ENCODE measurements at regions of chr11 and their contacts with region 1.

Region 1: GRCh38 chr11:62591448-62592145 is at the start of gene TUT1:
- DNase-seq: peak; percentile 78 to 99 (median 98)
- ATAC-seq: peak; percentile 92
- H3K4me3 ChIP-seq: peak within 1 kb of the TSS; percentile 82
- H3K4me3 Mint-ChIP-seq: peak within 1 kb of the TSS; percentile 87 to 100 (median 96)
- H3K27ac ChIP-seq: peak within 1 kb of the TSS; percentile 94
- H3K27ac Mint-ChIP-seq: peak within 1 kb of the TSS; percentile 92 to 99 (median 96)
- H3K4me1 ChIP-seq: peaks cover 14 to 35% of the 10 kb centered on the region in 2 donors
- H3K4me1 Mint-ChIP-seq: peaks cover 26 to 66% (median 52%) of the 10 kb centered on the region in 7 donors
- H3K27me3 ChIP-seq: no peaks in the 10 kb centered on the region
- H3K27me3 Mint-ChIP-seq: peaks cover 0 to 4% (median 0%) of the 10 kb centered on the region in 5 donors
- total RNA-seq, gene TUT1: 34.5 to 54.6 (median 37.4) TPM

Region 2: DNA sequence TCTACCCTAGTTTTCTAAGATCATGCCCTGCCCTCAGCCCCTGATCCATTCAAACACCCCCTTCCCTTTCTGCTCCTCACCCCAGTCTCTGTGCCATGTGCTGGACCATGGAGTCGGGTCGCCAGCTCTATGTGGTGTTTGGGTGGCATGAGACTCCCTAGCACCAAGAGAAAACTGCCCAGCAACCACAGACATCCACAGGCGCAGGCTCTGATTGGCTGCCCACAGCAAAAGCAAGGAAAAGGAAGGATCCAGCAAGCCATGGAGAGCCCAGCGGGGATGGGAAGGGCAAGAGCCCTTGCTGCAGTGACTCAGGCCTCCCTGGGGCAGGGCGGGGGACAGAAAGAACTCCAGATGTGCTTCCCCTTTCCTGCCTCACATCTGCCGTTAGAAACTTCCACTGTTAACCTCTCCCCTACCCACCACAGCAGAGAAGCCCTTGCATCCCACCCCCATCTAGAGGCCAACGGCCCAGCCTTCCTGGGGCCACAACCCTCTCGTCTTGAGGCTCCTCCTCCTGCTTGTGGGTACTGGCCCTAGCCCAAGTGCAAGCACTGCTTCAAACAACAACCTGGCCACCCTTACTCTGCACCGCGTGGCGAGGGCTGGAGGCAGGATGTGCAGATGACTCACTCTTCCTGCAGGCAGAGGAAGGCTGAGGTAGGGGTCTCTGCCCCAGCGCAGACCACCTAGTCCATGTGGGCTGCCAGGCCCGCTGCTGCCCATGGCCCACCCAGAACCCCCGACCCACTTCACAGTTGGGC is 35.3 kb before region 1 on chr11:
- CTCF ChIA-PET with region 1: interaction called, 7 read pairs
- POLR2A ChIA-PET with region 1: interaction called, 15 read pairs
- intact Hi-C with region 1: loop called (anchors 2 kb)
- DNase-seq: peak; percentile 58 to 82 (median 72)
- ATAC-seq: peak; percentile 48
- H3K4me3 ChIP-seq: peak overlapping the region; percentile 42
- H3K4me3 Mint-ChIP-seq: peak overlapping the region; percentile 65 to 87 (median 78)
- H3K27ac ChIP-seq: peak overlapping the region; percentile 87
- H3K27ac Mint-ChIP-seq: peak overlapping the region; percentile 87 to 100 (median 98)
- H3K4me1 ChIP-seq: peaks cover 69 to 84% of the 10 kb centered on the region in 2 donors
- H3K4me1 Mint-ChIP-seq: peaks cover 62 to 88% (median 81%) of the 10 kb centered on the region in 7 donors
- H3K27me3 ChIP-seq: no peaks in the 10 kb centered on the region
- H3K27me3 Mint-ChIP-seq: peaks cover 0 to 2% (median 0%) of the 10 kb centered on the region in 5 donors

Region 3: DNA sequence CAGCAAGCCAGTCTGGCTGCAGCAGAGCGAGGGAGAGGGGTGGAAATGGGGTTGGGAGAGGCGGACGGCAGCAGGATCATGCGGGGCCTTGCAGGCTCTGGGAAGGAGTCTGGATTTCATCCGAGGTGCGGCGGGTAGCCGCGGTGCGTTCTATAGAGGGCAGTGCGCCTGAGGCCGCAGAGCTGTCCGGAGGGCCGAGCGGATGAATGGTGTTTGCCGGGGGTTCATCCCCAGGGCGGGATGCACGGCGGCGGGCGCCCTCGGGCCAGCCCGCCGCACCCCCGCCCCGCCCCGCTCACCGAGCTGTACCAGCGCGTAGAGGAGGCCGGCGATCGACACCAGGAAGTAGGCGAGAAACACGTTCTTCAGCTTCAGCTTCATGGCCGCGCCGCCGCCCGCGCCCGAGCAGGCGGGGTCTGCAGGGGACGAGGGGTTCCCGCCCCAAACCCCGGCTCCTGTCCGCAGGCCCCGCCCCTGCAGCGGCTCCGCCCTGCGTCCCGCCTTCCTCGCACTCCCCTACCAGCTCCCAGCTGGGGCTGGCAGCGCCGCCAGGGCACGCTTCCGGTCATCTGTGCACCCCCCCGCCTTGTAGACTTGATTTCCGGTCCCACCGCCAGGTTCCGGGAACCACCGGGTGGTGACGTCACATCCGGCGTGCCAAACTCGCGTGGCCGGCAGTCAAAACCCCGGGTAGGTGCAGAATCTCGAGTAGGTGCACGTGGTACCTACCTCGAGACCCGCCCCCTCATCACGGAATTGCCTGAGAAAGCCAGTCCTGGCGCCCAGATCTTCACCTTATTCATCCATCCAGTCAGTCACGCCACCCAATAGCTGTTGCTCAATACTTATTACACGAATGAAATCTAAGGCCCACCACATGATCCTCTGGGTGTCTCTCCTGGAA is 30.2 kb after region 1 on chr11 and contains the start of gene B3GAT3:
- CTCF ChIA-PET with region 1: interaction called, 6 read pairs
- POLR2A ChIA-PET with region 1: interaction called, 70 read pairs
- intact Hi-C with region 1: loop called (anchors 1 kb)
- DNase-seq: peak; percentile 87 to 97 (median 94)
- ATAC-seq: peak; percentile 93
- H3K4me3 ChIP-seq: peak within 1 kb of the TSS; percentile 97
- H3K4me3 Mint-ChIP-seq: peak within 1 kb of the TSS; percentile 91 to 99 (median 94)
- H3K27ac ChIP-seq: peak within 1 kb of the TSS; percentile 92
- H3K27ac Mint-ChIP-seq: peak within 1 kb of the TSS; percentile 92 to 99 (median 96)
- H3K4me1 ChIP-seq: peaks cover 11% of the 10 kb centered on the region in 2 donors
- H3K4me1 Mint-ChIP-seq: peaks cover 13 to 29% (median 26%) of the 10 kb centered on the region in 7 donors
- H3K27me3 ChIP-seq: no peaks in the 10 kb centered on the region
- H3K27me3 Mint-ChIP-seq: no peaks in the 10 kb centered on the region
- total RNA-seq, gene B3GAT3: 55.8 to 78.1 (median 71.2) TPM

Region 4: DNA sequence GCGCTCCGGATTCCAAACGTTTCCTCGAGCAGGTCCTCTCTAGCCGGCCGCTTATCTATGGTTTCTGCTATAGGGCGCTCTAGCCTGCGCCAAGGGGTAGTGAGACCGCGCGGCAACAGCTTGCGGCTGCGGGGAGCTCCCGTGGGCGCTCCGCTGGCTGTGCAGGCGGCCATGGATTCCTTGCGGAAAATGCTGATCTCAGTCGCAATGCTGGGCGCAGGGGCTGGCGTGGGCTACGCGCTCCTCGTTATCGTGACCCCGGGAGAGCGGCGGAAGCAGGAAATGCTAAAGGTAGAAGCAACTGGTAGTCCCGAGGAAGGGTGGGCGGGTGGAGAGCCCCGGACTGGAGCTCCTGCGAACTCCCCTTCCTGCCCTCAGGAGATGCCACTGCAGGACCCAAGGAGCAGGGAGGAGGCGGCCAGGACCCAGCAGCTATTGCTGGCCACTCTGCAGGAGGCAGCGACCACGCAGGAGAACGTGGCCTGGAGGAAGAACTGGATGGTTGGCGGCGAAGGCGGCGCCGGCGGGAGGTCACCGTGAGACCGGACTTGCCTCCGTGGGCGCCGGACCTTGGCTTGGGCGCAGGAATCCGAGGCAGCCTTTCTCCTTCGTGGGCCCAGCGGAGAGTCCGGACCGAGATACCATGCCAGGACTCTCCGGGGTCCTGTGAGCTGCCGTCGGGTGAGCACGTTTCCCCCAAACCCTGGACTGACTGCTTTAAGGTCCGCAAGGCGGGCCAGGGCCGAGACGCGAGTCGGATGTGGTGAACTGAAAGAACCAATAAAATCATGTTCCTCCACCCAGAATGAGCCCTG is 80.2 kb after region 1 on chr11 and contains the starts of genes LBHD1 and UQCC3:
- CTCF ChIA-PET with region 1: interaction called, 5 read pairs
- POLR2A ChIA-PET with region 1: interaction called, 269 read pairs
- intact Hi-C with region 1: loop called in 1 of 2 experiments (anchors 1 kb)
- DNase-seq: peak; percentile 49 to 80 (median 73)
- ATAC-seq: peak; percentile 85
- H3K4me3 ChIP-seq: peak within 1 kb of the TSS; percentile 62
- H3K4me3 Mint-ChIP-seq: peak within 1 kb of the TSS; percentile 94 to 100 (median 99)
- H3K27ac ChIP-seq: peak within 1 kb of the TSS; percentile 90
- H3K27ac Mint-ChIP-seq: peak within 1 kb of the TSS; percentile 91 to 97 (median 96)
- H3K4me1 ChIP-seq: peaks cover 12 to 25% of the 10 kb centered on the region in 2 donors
- H3K4me1 Mint-ChIP-seq: peaks cover 12 to 62% (median 51%) of the 10 kb centered on the region in 7 donors
- H3K27me3 ChIP-seq: no peaks in the 10 kb centered on the region
- H3K27me3 Mint-ChIP-seq: no peaks in the 10 kb centered on the region
- total RNA-seq, gene LBHD1: 13.8 to 26.4 (median 20.8) TPM
- total RNA-seq, gene UQCC3: 2.2 to 8.2 (median 5.8) TPM

Region 5: DNA sequence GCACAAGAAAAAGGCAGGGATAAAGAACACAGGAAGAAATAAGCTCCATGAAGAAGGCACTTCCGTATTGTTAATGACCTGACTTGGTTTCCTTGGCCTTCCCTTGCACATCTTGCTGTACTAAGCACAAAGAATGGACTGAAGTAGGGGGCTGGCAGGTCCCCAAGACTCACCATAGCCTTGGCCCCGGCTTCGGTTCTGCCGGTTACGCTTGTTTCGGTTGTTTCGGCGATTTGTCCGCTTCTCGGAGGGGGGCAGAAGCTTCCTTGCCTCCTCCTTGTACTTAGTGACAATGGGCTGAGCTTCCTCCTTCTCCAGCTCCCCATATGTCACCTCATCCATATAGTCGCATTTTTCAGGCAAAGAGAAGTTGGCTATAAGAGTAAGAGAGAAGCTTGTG is 125.2 kb after region 1 on chr11:
- CTCF ChIA-PET with region 1: no interaction called
- POLR2A ChIA-PET with region 1: no interaction called
- intact Hi-C with region 1: no loop called
- DNase-seq: no peak
- ATAC-seq: no peak
- H3K4me3 ChIP-seq: no peak overlapping the region
- H3K4me3 Mint-ChIP-seq: no peak overlapping the region
- H3K27ac ChIP-seq: peak overlapping the region; percentile 52
- H3K27ac Mint-ChIP-seq: peak overlapping the region in 6 of 9 donors; percentile 14 to 56 (median 42)
- H3K4me1 ChIP-seq: peaks cover 0 to 11% of the 10 kb centered on the region in 2 donors
- H3K4me1 Mint-ChIP-seq: peaks cover 7 to 70% (median 56%) of the 10 kb centered on the region in 7 donors
- H3K27me3 ChIP-seq: no peaks in the 10 kb centered on the region
- H3K27me3 Mint-ChIP-seq: no peaks in the 10 kb centered on the region

Region 6: DNA sequence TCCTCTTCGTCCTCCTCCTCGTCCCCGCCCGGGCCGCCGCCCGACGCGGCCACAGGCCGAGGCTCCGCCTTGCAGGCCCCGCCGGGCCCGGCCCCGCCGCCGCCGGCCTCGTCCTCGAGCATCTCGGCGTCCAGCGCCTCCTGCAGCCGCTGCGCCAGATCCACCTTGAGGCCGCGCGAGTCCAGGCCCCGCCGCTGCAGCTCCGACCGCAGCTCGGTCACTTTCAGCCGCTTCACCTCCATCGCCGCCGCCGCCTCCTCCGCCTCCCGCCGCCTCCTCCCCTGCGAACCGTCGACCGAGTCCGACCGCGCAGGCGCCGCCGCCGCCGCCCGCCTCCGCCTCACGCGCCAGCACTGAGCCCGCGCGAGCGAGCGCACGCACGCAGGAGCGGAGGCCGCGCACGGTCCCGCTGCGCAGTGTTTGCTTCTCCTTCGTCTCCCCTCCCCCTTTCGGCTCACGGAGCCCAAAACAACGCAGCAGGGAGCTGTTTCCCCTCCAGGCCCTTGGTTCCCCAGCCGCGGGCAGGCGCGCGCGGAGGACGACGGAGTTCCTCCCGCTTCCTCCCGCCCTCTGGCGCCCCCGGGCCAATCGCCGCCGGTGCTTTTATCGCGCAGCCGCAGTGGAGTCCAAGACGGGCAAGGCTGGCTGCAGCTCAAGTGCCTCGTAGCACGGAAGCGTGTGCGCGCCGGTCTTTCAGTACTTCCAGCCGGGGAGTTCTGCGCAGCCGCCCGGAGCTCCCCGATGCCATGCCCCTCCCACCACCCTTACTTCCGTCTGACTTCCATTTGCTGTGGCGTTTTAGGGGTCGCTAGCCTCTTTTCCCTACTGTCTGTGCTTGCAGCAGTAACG is 135.5 kb after region 1 on chr11 and contains the start of gene HNRNPUL2:
- CTCF ChIA-PET with region 1: interaction called, 5 read pairs
- POLR2A ChIA-PET with region 1: interaction called, 45 read pairs
- intact Hi-C with region 1: loop called (anchors 1 to 5 kb)
- DNase-seq: peak; percentile 96 to 100 (median 99)
- ATAC-seq: peak; percentile 89
- H3K4me3 ChIP-seq: peak within 1 kb of the TSS; percentile 87
- H3K4me3 Mint-ChIP-seq: peak within 1 kb of the TSS; percentile 91 to 99 (median 96)
- H3K27ac ChIP-seq: peak within 1 kb of the TSS; percentile 92
- H3K27ac Mint-ChIP-seq: peak within 1 kb of the TSS; percentile 95 to 100 (median 98)
- H3K4me1 ChIP-seq: peaks cover 36 to 38% of the 10 kb centered on the region in 2 donors
- H3K4me1 Mint-ChIP-seq: peaks cover 23 to 65% (median 58%) of the 10 kb centered on the region in 7 donors
- H3K27me3 ChIP-seq: no peaks in the 10 kb centered on the region
- H3K27me3 Mint-ChIP-seq: peaks cover 0 to 2% (median 0%) of the 10 kb centered on the region in 5 donors
- total RNA-seq, gene HNRNPUL2: 43.4 to 77.5 (median 65.3) TPM

Region 7: DNA sequence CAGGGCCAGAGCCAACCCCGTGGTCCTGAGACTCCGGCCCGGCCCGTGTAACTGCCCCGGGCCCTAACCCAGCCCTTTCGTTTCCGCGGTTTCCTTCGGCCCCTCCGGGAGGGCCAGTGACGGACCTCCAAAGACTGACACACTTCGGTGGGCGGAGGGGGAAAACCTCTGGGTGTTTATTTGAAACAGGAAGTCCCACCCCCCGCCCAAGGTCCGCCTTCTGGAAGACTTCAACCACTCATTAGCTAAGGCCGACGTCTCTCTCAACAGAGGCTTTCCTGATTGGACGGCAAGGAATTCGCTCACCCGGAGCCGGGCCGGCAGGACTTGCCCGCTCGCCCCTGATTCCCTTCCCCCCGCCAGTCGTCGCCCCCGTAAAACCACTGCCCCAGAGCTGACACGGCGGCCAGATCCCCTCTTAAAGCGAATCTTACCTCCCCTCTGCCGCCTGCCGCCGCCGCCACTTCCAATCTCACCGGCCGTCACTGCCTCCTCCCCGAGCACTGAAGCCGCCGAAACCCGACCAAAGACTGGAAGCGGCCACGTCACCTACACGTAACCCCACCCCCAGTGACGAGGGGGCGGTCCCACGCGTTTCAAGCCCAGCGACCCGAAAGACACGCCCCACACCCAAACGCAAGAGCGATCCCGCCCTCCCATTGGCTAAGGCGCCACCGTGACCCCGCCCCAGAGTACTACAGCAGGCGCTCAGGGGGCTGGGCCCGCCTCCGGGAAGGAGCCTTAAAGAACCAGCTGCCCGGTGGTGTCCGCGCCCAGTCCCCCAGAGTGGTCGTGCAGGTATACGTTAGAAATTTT is 240.1 kb after region 1 on chr11 and contains the start of gene STX5:
- CTCF ChIA-PET with region 1: no interaction called
- POLR2A ChIA-PET with region 1: interaction called, 4 read pairs
- intact Hi-C with region 1: loop called in 1 of 2 experiments (anchors 5 kb)
- DNase-seq: peak; percentile 96 to 100 (median 99)
- ATAC-seq: peak; percentile 98
- H3K4me3 ChIP-seq: peak within 1 kb of the TSS; percentile 95
- H3K4me3 Mint-ChIP-seq: peak within 1 kb of the TSS; percentile 87 to 99 (median 96)
- H3K27ac ChIP-seq: peak within 1 kb of the TSS; percentile 99
- H3K27ac Mint-ChIP-seq: peak within 1 kb of the TSS; percentile 93 to 100 (median 99)
- H3K4me1 ChIP-seq: peaks cover 16% of the 10 kb centered on the region in 2 donors
- H3K4me1 Mint-ChIP-seq: peaks cover 15 to 57% (median 45%) of the 10 kb centered on the region in 7 donors
- H3K27me3 ChIP-seq: no peaks in the 10 kb centered on the region
- H3K27me3 Mint-ChIP-seq: no peaks in the 10 kb centered on the region
- total RNA-seq, gene STX5: 47.0 to 152 (median 57.3) TPM

Measured in naive thymus-derived CD4-positive, alpha-beta T cell (primary cell).